ENCODE measurements at regions of chrX and their contacts with region 1.

Region 1: DNA sequence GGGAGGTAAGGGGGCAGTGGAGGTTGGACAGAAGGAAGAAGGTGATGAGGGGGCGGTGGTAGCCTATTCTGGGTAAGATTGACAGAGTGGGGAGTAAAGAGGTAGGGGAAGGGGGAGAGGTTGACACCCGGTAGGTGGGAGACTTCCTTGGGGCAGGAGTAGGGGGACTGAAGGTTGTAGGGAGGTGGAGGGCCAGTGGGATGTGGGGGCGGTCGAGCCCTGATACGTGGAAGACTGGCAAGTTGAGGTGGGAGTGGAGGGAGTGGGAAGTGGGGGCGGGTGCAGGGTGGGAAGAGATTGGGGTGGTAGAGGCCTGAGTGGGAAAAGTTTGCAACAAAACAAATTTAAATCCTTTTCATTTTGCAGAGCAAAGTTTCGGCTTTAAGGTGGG is 1.7 kb downstream of the GCNA start:
- DNase-seq: no peak
- ATAC-seq: no peak
- H3K4me3 ChIP-seq: no peak overlapping the region
- H3K27ac ChIP-seq: no peak overlapping the region
- H3K4me1 ChIP-seq: peaks cover 0 to 4% (median 0%) of the 10 kb centered on the region in 9 donors
- H3K27me3 ChIP-seq: no peaks in the 10 kb centered on the region
- CTCF ChIP-seq: no peak

Region 2: DNA sequence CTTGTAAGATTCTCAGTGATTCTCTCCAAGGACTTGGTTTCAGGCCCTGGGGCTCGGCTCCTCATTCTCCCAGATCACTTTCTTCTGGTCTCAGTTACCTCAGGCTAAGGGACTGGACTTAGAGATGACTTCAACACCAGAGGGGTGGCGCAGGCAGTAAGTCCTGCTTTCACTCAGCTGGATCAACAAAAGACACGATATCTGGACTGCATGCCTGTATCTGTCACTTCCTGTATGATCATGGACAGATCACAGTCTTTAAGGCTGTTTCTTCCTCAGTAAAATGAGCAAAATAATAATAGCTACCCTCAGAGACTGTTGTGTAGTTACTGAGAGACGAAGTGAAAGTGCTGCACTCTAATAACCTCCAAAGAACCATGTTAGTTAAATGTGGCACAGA is 57.9 kb after region 1 on chrX:
- intact Hi-C with region 1: loop called in 1 of 10 experiments (anchors 5 kb)
- DNase-seq: no peak
- ATAC-seq: peak in 4 of 8 donors; percentile 41 to 67 (median 51)
- H3K4me3 ChIP-seq: no peak overlapping the region
- H3K27ac ChIP-seq: no peak overlapping the region
- H3K4me1 ChIP-seq: peaks cover 0 to 12% (median 0%) of the 10 kb centered on the region in 9 donors
- H3K27me3 ChIP-seq: no peaks in the 10 kb centered on the region
- CTCF ChIP-seq: no peak